SK-N-SH (cell line): ENCODE measurements at regions of chr4 and their contacts with region 1.

Region 1: DNA sequence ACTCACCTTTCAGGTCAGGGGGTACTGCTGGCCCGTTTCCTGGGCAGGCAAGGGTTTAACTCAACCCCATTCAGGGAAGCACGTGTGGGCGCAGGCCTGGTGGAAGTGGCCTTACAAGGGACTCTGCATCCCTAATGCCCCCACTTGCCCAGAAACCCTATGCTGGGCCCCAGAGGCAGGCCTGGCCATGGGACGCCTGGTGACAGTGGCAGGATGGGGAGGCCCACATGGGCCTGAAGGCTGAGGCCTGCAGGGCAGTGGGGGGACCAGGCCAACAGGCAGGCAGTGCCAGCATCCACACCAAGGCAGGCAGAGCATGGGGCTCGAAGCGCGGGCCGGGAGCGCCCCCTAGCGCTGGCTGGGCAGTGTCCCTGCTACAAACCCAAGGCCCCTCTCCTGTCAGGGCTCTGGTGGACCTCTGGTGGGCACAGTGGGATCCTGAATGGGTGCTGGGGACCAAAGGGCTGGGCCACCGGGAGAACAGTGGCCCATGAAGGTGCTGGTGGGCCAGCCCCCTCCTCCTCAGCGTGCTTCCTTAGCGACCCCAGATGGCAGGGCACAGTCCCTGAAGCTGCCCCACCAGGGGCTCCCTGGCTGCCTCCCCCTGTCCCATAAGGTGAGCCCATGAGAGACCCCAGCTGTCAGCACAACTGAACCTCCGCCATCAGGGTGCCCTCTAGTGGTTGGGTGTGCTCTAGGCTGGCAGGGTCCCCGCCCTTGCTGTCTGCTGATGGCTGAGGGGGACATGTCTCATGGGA is 16.8 kb downstream of the FGFR3 start:
- DNase-seq: peak; percentile 96
- H3K4me3 ChIP-seq: peak overlapping the region in 1 of 2 experiments; percentile 42; a peak in 1 of 4 replicates
- H3K27ac ChIP-seq: no peak overlapping the region
- H3K4me1 ChIP-seq: peaks cover 0 to 3% of the 10 kb centered on the region in 2 experiments; a peak in 1 of 4 replicates
- H3K27me3 ChIP-seq: no peaks in the 10 kb centered on the region
- CTCF ChIP-seq: peak; percentile 93
- EP300 ChIP-seq: no peak
- RAD21 ChIP-seq: peak; percentile 92

Region 2: DNA sequence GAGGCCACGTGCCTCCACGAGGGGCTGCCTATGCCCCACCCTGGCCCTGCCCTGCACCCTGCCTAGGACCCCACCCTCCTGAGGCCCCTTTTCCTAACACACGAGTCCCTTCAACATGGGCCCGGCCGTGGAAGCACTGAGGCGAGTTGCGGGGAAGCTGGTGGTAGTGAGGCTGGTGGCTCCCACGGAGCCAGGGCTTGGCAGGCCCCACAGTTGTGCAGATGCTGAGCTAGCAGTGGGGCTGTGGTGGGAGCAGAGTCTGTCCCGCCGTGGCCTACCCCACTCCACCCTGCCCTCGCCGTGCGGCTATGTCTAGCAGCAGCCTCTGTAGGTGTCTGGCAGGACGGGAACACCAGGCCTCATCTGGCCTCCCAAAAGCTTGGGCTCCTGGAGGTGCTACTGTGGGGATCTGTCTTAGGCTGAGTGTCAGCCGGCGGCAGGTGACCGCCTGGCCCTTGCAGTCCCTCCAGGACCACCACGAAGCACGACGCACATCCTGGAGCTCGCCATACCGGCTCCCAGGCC is 69.8 kb before region 1 on chr4:
- CTCF ChIA-PET with region 1: interaction called, 44 read pairs
- POLR2A ChIA-PET with region 1: no interaction called
- DNase-seq: no peak
- H3K4me3 ChIP-seq: no peak overlapping the region
- H3K27ac ChIP-seq: no peak overlapping the region
- H3K4me1 ChIP-seq: no peaks in the 10 kb centered on the region
- H3K27me3 ChIP-seq: no peaks in the 10 kb centered on the region
- CTCF ChIP-seq: no peak
- EP300 ChIP-seq: no peak
- RAD21 ChIP-seq: no peak

Region 3: GRCh38 chr4:1767770-1768366 is 42.1 kb before region 1 on chr4:
- CTCF ChIA-PET with region 1: interaction called, 21 read pairs
- POLR2A ChIA-PET with region 1: no interaction called
- DNase-seq: peak; percentile 95
- H3K4me3 ChIP-seq: peak overlapping the region in 1 of 2 experiments; percentile 52; a peak in 2 of 4 replicates
- H3K27ac ChIP-seq: no peak overlapping the region; a peak in 1 of 4 replicates
- H3K4me1 ChIP-seq: peaks cover 0 to 19% of the 10 kb centered on the region in 2 experiments; a peak in 1 of 4 replicates
- H3K27me3 ChIP-seq: no peaks in the 10 kb centered on the region
- CTCF ChIP-seq: peak; percentile 37
- EP300 ChIP-seq: no peak
- RAD21 ChIP-seq: peak; percentile 27; the same call in 1 of the 2 replicates

Region 4: GRCh38 chr4:1784789-1785591 is 24.9 kb before region 1 on chr4:
- CTCF ChIA-PET with region 1: interaction called, 29 read pairs
- POLR2A ChIA-PET with region 1: no interaction called
- DNase-seq: peak; percentile 90
- H3K4me3 ChIP-seq: no peak overlapping the region
- H3K27ac ChIP-seq: no peak overlapping the region
- H3K4me1 ChIP-seq: peaks cover 0 to 8% of the 10 kb centered on the region in 2 experiments; a peak in 1 of 4 replicates
- H3K27me3 ChIP-seq: no peaks in the 10 kb centered on the region
- CTCF ChIP-seq: no peak
- EP300 ChIP-seq: no peak
- RAD21 ChIP-seq: no peak